ENCODE measurements at regions of chr9 and their contacts with region 1.

Region 1: DNA sequence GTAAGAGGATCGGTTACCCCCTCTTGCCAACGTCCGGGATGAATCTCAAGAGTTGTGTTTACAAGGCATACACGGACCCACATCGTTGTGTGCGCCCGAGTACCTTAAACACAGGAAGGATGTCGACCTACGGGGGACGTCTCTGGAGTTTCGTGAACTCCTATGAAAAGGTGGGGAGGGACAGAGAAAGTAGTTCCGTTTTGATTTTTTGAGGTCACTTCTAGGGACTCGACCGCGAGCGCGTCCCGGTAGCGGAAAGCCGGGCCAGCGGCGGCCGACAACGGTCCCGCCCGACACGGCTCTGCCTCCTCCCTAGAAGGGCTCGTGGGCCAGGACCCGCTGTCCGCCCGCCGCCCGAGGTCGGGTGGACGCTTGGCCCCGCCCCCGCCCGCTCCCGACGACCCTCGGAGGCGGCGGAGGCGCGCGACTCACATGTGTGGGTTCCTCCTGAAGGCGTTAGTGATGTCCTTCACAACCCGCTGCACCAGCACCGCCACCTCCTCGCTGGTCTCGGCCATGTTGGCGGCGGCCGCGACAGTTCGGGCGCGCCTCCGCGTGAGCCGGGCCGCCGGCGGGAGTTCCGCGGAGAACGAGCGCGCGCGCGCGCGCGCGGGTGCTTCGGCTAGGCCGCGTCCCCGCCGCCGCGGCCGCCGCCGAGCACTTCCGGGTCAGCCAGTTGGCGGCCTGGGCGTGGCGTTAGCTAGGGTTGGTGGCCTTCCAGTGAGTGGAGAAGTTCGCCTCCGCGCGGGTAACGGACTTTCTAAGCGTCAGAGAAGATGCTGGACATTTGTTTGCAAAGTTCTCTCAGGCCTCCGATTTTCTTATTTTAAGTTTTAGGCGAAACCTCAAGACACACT is at the start of gene PTAR1:
- DNase-seq: peak; percentile 97
- ATAC-seq: peak; percentile 98
- total RNA-seq, gene PTAR1: 24.2 TPM

Region 2: DNA sequence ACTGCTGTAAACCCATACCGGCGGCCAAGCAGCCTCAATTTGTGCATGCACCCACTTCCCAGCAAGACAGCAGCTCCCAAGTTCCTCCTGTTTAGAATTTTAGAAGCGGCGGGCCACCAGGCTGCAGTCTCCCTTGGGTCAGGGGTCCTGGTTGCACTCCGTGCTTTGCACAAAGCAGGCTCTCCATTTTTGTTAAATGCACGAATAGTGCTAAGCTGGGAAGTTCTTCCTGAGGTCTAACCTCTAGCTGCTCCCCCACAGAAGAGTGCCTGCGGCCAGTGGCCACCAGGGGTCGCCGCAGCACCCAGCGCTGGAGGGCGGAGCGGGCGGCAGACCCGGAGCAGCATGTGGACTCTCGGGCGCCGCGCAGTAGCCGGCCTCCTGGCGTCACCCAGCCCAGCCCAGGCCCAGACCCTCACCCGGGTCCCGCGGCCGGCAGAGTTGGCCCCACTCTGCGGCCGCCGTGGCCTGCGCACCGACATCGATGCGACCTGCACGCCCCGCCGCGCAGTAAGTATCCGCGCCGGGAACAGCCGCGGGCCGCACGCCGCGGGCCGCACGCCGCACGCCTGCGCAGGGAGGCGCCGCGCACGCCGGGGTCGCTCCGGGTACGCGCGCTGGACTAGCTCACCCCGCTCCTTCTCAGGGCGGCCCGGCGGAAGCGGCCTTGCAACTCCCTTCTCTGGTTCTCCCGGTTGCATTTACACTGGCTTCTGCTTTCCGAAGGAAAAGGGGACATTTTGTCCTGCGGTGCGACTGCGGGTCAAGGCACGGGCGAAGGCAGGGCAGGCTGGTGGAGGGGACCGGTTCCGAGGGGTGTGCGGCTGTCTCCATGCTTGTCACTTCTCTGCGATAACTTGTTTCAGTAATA is 724.0 kb before region 1 on chr9 and contains the start of gene FXN:
- intact Hi-C with region 1: loop called (anchors 10 kb)
- DNase-seq: peak; percentile 94
- ATAC-seq: peak; percentile 96
- total RNA-seq, gene FXN: 36.6 TPM

Region 3: GRCh38 chr9:69877854-69878514 is 118.3 kb after region 1 on chr9:
- intact Hi-C with region 1: loop called (anchors 5 kb)
- DNase-seq: no peak
- ATAC-seq: peak; percentile 56

Measured in Right ventricle myocardium inferior (tissue), 1 donor.